Psoas muscle (tissue), 8 donors: ENCODE measurements at regions of chr17 and their contacts with region 1.

Region 1: DNA sequence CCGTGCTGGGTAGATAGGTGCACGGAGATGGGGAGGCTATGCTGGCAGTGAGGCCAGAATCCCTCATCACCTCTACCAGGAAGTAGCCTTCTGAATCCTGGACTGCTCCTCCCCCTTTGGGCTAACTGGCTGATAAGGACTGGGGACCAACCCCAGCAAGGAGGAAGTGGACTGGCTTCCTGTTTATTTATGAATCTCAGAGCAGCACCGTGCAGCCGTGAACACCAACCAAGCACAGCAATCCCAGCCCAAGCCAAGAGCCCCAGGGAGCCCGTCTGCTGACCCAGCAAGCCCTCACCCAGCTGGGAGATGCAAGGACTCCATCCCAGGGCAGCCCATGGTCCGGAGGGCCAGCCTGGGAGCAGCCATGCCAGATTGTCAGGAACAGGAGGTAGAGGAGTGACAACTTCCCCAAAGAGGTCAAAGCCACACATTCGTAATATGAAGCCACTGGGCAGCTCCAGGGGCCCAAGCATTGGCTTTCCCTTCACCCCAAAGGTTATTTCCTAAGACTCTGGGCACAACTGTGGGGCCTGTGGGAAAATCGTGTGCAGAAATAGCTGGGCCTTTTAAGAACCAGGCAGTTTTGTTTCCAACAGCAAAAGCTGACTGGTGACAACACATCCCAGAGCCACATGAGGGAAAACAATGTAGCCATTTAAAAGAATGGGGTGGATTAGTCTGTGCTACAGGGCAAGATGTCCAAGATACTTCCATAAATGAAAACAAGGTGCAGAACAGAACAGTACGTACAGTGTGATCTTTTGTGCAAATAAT is 23.9 kb downstream of the PHB1 start:
- DNase-seq: no peak
- ATAC-seq: no peak
- H3K4me3 ChIP-seq: no peak overlapping the region
- H3K27ac ChIP-seq: no peak overlapping the region
- H3K4me1 ChIP-seq: no peaks in the 10 kb centered on the region
- H3K27me3 ChIP-seq: no peaks in the 10 kb centered on the region
- CTCF ChIP-seq: no peak

Region 2: DNA sequence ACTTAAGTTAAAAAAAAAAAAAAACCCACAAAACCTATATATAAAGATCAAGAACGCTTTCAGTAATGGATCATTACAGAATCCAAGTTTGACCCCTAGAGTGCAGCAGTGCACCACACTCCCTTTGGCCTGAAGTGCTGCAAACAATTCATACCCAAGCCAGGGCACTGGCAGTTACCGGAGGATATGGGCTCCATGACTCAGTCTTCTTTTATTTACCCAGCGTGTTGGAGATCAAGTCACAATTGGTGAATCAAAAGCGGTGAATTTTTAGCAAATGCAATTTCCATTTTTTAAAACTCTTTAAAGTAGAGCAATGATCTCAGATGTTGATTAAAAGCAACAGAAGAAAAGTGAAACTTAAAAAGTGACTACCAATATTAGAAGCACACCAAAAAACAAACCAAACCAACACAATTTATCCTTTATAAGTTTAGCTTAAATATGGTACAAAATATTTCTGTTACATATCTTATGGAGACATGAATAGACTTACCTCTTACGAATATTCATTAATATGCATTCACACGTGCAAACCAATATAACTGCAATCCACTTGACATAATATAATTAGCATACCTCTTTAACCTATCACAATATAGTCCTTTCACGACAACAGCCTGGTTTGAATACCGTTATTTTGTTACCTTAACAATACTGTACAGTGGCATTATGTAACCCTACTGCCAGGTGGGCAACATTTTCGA is 75.0 kb before region 1 on chr17:
- intact Hi-C with region 1: loop called (anchors 1 to 2 kb)
- DNase-seq: peak; percentile 63 to 84
- ATAC-seq: peak; percentile 98 to 100 (median 100)
- H3K4me3 ChIP-seq: peak overlapping the region; percentile 37
- H3K27ac ChIP-seq: peak overlapping the region; percentile 1
- H3K4me1 ChIP-seq: peaks cover 9% of the 10 kb centered on the region
- H3K27me3 ChIP-seq: no peaks in the 10 kb centered on the region
- CTCF ChIP-seq: peak; percentile 88

Region 3: DNA sequence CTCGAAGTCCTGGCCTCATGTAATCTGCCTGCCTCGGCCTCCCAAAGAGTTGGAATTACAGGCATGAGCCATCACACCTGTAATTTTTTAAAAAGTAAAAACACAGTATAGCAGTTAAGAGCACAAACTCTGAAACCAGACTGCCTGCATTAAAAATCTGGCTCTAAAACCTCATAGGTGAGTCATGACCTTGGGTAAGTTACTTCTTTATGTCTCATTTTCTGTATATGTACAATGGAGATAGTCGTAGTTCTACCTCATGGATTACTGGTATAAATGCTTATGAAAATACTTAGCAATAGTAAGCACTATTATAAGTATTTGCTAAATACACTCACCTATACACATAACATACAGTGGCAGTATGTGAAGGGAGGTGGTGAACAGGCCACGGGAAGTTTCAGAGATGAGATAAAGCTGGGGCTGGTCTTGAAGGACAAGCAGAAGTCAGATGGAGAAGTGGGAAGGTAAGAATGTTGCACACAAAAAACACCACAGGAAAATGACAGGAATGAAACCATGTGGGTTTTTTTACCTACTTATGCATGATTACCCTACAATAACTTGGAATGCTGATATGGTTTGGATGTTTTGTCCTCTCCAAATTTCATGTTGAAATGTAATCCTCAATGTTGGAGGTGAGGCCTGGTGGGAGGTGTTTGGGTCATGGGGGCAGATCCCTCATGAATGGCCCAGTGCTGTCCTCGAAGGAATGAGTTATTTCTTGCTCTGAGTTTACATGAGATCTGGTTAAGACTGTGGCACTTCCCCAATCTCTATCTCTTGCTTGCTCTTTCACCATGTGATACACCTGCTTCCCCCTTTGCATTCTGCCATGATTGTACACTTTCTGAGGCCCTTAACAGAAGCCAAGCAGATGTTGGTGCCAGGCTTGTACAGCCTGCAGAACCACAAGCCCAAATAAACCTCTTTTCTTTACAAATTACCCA is 62.6 kb before region 1 on chr17:
- intact Hi-C with region 1: no loop called
- DNase-seq: no peak
- ATAC-seq: no peak
- H3K4me3 ChIP-seq: no peak overlapping the region
- H3K27ac ChIP-seq: no peak overlapping the region
- H3K4me1 ChIP-seq: no peaks in the 10 kb centered on the region
- H3K27me3 ChIP-seq: no peaks in the 10 kb centered on the region
- CTCF ChIP-seq: no peak

Region 4: GRCh38 chr17:49351572-49352140 is 39.1 kb before region 1 on chr17:
- intact Hi-C with region 1: no loop called
- DNase-seq: no peak
- ATAC-seq: no peak
- H3K4me3 ChIP-seq: no peak overlapping the region
- H3K27ac ChIP-seq: no peak overlapping the region
- H3K4me1 ChIP-seq: peaks cover 8% of the 10 kb centered on the region
- H3K27me3 ChIP-seq: no peaks in the 10 kb centered on the region
- CTCF ChIP-seq: no peak

Region 5: GRCh38 chr17:49361902-49362722 is 28.6 kb before region 1 on chr17 and contains the start of gene ZNF652:
- intact Hi-C with region 1: loop called in 1 of 2 experiments (anchors 2 kb)
- DNase-seq: peak; percentile 93 to 95
- ATAC-seq: peak; percentile 93 to 94 (median 94)
- H3K4me3 ChIP-seq: peak within 1 kb of the TSS; percentile 92
- H3K27ac ChIP-seq: peak within 1 kb of the TSS; percentile 84
- H3K4me1 ChIP-seq: peaks cover 35% of the 10 kb centered on the region
- H3K27me3 ChIP-seq: no peaks in the 10 kb centered on the region
- CTCF ChIP-seq: no peak
- total RNA-seq, gene ZNF652: 21.3 to 30.1 (median 23.8) TPM

Region 6: GRCh38 chr17:49422714-49423113 is 32.0 kb after region 1 on chr17:
- intact Hi-C with region 1: no loop called
- DNase-seq: no peak
- ATAC-seq: no peak
- H3K4me3 ChIP-seq: no peak overlapping the region
- H3K27ac ChIP-seq: no peak overlapping the region
- H3K4me1 ChIP-seq: no peaks in the 10 kb centered on the region
- H3K27me3 ChIP-seq: no peaks in the 10 kb centered on the region
- CTCF ChIP-seq: no peak